BJ (cell line): ENCODE measurements at regions of chr4 and their contacts with region 1.

Region 1: DNA sequence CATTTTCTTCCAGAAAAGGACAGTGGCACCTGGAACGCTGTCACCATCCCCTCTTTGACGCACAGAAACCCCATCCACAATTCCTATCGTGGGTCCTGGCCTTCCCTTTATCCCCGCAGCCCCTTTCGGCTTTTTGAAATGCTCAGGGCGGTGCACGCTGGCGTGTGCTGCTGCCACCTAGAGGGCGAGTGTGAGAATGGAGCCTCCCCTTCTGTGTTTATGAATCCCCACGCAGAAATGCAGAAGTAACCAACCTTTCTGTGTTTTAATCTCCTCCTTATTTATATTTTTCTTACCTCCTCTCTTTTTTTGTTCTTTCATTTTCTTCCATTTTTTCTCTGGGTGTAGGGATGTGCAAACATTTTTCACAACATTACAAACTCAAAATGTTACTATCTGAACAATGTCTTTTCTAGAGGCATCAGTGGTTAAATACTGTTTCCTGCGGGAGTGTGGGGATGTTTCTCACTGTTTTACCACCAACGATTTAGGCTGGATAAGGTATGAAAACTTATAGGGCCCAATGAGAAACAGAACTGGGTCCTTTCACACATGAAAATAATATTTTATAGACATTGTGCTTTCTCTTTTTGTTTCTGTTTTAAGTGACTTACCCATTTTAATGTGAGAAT is 50.0 kb downstream of the TMA16 start:
- DNase-seq: no peak
- H3K4me3 ChIP-seq: peak overlapping the region; percentile 39
- H3K27me3 ChIP-seq: no peaks in the 10 kb centered on the region
- CTCF ChIP-seq: peak; percentile 98

Region 2: DNA sequence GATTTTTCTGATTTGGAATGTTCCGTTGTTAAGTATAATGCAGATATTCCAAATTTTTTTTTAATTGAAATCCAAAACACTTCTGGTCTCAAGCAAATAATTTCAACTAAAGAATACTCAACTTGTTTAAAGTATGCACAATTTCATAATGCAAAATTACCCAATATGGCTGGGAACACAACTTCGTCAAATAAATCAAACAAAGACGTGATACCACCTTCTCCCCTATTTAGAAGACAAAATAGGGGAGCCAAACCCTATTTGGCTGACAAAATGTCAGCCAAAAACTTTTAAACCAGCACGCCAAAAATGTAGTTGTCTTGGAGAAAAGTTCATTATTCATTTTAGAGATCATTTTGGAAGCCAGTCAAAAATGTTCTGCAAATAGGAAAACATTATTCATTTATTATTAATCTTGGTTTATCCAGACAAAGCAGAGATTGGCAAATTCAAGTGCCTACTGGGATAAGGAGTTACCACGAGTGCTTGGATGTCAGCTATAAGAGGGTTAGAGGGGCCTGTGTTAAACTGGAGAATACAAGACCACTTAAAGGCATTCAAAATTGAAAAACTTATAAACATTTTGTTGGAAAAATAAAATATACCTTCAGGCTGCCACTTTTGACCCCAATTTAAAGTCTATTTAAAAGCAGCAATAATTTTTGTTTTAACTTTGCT is 67.6 kb before region 1 on chr4:
- CTCF ChIA-PET with region 1: interaction called, 21 read pairs
- POLR2A ChIA-PET with region 1: no interaction called
- DNase-seq: no peak
- H3K4me3 ChIP-seq: no peak overlapping the region
- H3K27me3 ChIP-seq: no peaks in the 10 kb centered on the region
- CTCF ChIP-seq: no peak

Region 3: GRCh38 chr4:163484906-163485305 is 59.6 kb before region 1 on chr4:
- CTCF ChIA-PET with region 1: interaction called, 69 read pairs
- POLR2A ChIA-PET with region 1: no interaction called
- DNase-seq: no peak
- H3K4me3 ChIP-seq: no peak overlapping the region
- H3K27me3 ChIP-seq: peaks cover 5% of the 10 kb centered on the region
- CTCF ChIP-seq: peak; percentile 64